CD4-positive, alpha-beta T cell (primary cell): ENCODE measurements at regions of chr18 and their contacts with region 1.

Region 1: GRCh38 chr18:29078273-29078672 is 901.3 kb upstream of the CDH2 start:
- DNase-seq: no peak
- ATAC-seq: no peak
- H3K4me3 ChIP-seq: no peak overlapping the region
- H3K4me3 Mint-ChIP-seq: no peak overlapping the region
- H3K27ac ChIP-seq: no peak overlapping the region
- H3K27ac Mint-ChIP-seq: no peak overlapping the region
- H3K4me1 ChIP-seq: no peaks in the 10 kb centered on the region
- H3K4me1 Mint-ChIP-seq: no peaks in the 10 kb centered on the region
- H3K27me3 ChIP-seq: no peaks in the 10 kb centered on the region
- H3K27me3 Mint-ChIP-seq: no peaks in the 10 kb centered on the region
- CTCF ChIP-seq: no peak

Region 2: DNA sequence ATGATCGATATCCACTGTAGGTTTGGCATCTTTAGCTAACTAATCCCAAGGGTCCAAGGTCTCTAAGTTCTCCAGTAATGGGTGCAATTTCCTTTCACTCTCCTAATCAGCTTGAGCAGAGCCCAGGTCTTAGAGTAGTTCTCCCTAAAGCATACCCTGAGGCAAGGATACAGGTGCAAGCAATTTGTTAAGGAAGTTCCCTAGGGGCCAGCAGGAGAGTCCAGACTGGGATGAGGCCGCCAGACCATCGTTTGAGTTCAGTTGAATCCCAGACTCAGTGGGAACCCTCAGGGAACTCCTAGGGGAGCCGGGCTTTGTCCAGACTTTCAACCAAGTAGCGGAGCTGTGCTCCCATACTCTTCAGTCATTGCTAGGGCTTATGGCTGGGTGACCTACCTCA is 65.9 kb before region 1 on chr18:
- CTCF ChIA-PET with region 1: no interaction called
- POLR2A ChIA-PET with region 1: no interaction called
- intact Hi-C with region 1: loop called in 1 of 2 experiments (anchors 10 kb)
- DNase-seq: no peak
- ATAC-seq: no peak
- H3K4me3 ChIP-seq: no peak overlapping the region
- H3K4me3 Mint-ChIP-seq: no peak overlapping the region
- H3K27ac ChIP-seq: no peak overlapping the region
- H3K27ac Mint-ChIP-seq: no peak overlapping the region
- H3K4me1 ChIP-seq: no peaks in the 10 kb centered on the region
- H3K4me1 Mint-ChIP-seq: no peaks in the 10 kb centered on the region
- H3K27me3 ChIP-seq: no peaks in the 10 kb centered on the region
- H3K27me3 Mint-ChIP-seq: no peaks in the 10 kb centered on the region
- CTCF ChIP-seq: no peak